Transverse colon (tissue), 4 donors: ENCODE measurements at regions of chr7 and their contacts with region 1.

Region 1: DNA sequence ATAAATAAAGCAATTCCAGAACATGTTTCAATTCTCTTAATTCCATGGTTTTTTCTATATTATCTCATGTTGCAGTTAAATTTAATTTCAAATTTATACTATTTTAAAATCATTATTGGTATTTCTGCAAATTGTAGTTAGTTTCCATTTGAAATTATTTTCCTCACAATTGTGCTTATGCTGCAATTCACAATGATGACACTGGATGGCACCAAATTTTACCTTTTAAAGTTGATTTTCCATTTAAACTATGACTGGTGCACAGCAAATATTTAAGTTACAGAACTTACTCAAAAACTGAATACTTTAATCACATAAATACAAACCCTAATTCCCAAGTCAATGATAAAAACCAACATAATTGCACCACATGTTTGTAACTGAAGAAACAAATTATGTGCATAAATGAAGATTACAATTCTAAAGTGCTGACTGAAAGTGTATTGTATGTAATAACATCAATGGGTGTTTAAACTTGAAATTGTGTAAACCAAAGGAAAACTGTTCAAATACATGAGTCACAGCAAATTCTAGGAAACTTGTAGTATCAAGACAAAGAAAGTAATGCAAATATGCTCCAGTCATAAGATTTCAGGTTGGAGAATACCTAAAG is 75.3 kb upstream of the AASS start:
- DNase-seq: no peak
- H3K4me3 ChIP-seq: no peak overlapping the region
- H3K27ac ChIP-seq: no peak overlapping the region
- H3K4me1 ChIP-seq: no peaks in the 10 kb centered on the region
- H3K27me3 ChIP-seq: no peaks in the 10 kb centered on the region
- CTCF ChIP-seq: peak; percentile 43 to 68 (median 55)
- EP300 ChIP-seq: no peak
- POLR2A ChIP-seq: no peak

Region 2: GRCh38 chr7:122528879-122529481 is 309.6 kb after region 1 on chr7:
- in situ Hi-C with region 1: loop called (anchors 5 to 25 kb)
- intact Hi-C with region 1: no loop called
- DNase-seq: no peak
- H3K4me3 ChIP-seq: no peak overlapping the region
- H3K27ac ChIP-seq: no peak overlapping the region
- H3K4me1 ChIP-seq: no peaks in the 10 kb centered on the region
- H3K27me3 ChIP-seq: no peaks in the 10 kb centered on the region
- CTCF ChIP-seq: peak; percentile 31 to 61 (median 50)
- EP300 ChIP-seq: no peak
- POLR2A ChIP-seq: no peak

Region 3: DNA sequence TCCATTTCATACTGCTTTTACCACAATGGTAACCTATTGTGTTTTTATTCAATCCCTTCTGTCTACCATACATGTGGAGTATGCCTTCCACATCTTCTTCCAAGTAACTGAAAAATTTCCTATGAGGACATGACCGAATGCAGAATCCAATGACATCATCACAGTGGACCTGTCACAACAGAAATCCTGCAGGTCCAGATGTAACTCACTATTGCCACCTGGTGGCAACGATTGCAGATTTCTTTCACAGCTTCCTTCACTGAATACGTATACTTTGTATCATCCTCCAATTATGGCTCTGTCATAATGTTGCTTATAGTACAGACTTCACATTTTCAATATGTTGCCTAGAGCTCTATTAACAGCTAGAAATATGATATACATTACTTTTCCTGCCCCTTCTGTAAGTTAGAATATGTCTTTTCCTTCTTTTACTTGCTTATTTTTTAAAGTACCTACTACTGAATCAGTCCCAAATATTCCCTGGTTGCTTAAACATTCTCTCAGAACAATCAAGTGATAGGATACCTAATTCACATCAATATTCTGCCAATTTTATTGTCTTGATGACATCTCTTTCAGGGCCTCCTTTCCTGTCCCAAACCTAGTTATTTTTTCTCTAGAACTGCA is 935.0 kb after region 1 on chr7:
- in situ Hi-C with region 1: no loop called
- intact Hi-C with region 1: loop called (anchors 10 kb)
- DNase-seq: peak; percentile 80
- H3K4me3 ChIP-seq: no peak overlapping the region
- H3K27ac ChIP-seq: no peak overlapping the region
- H3K4me1 ChIP-seq: no peaks in the 10 kb centered on the region
- H3K27me3 ChIP-seq: no peaks in the 10 kb centered on the region
- CTCF ChIP-seq: peak; percentile 64 to 75 (median 72)
- EP300 ChIP-seq: no peak
- POLR2A ChIP-seq: no peak